ENCODE measurements at regions of chr5 and their contacts with region 1.

Region 1: DNA sequence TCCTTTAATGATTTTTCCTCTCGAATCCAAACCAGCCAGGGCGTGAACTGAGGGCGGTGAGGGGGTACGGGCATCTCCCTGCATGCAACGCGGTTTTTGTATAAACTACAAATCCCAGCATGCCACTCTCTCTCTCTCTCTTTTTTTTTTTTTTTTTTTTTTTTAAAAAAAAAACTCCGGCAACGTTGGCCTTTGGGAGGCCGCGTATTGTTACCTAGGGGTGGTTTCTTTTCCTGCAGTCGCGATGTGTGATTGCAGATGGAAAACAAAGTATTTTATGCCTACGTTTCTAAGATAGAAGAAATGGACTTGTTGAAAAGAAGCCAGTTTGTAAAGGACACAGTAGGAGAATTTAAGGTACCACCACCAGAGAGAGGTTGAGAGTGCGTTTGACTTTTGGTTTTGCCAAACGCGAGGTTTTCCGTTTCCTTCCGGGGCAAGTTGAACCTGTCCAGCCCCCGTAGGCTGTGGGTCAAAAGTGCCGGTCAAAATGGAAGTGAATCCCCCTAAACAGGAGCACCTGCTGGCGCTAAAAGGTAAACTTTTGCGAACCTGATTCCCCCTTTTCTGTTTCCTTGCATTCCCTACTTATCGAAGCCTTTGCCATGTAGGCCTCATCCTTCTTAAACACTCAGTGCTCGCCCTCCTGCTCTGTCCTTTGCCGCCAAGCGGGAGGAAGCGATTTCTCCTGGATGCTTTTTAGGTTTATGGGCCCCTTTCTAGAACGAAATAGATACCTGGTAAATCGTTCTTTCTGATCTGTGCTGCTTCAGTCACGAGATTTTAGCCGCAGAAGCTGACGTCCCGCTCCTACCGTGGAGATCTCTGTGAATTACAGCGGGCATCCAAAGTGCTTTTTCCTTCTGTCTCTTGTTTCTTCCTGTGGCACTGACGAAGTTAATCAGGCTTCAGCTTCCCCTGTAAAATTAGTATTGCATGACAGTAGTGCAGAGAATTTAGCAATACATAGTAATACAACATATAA is at the starts of genes SHLD3 and TRAPPC13:
- DNase-seq: peak; percentile 47 to 92
- H3K4me3 ChIP-seq: peak within 1 kb of the TSS; percentile 85 to 86
- H3K27ac ChIP-seq: peak within 1 kb of the TSS; percentile 80 to 83
- H3K4me1 ChIP-seq: peaks cover 0 to 21% of the 10 kb centered on the region in 2 donors
- H3K27me3 ChIP-seq: no peaks in the 10 kb centered on the region
- CTCF ChIP-seq: peak in 1 of 3 experiments; percentile 6
- total RNA-seq, gene SHLD3: not detected
- total RNA-seq, gene TRAPPC13: 7.6 TPM

Region 2: DNA sequence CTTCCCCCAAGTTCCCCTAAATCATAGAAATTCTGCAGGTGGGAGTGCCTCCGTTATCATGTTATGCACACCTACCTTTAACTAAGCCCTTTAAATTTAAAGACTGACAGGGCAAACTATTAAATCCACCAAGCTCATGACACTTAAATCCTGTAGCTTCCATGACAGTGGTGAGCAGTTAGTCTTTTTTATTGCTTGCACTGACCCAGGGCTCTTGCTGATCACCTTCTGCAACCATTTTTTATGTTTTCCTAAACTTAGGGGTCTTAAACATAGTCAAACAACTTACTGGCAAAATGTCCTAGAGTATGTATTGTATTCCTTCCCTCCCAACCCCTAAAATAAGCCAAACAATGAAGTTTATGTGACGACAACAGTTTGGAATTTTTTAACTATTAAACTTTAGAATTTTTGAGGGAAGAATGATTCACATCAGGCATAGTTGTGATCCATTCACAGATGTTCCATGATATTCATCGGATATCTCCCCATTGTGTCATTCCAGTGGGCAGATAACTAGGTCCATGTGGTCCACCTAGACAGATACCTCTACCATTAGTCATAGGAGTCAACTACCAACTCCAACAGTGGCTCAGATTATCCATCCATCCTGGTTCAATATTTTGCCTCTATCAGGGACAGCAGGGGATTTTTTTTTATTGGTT is 426.3 kb before region 1 on chr5:
- intact Hi-C with region 1: no loop called
- DNase-seq: no peak
- H3K4me3 ChIP-seq: no peak overlapping the region
- H3K27ac ChIP-seq: no peak overlapping the region
- H3K4me1 ChIP-seq: no peaks in the 10 kb centered on the region
- H3K27me3 ChIP-seq: no peaks in the 10 kb centered on the region
- CTCF ChIP-seq: no peak

Region 3: DNA sequence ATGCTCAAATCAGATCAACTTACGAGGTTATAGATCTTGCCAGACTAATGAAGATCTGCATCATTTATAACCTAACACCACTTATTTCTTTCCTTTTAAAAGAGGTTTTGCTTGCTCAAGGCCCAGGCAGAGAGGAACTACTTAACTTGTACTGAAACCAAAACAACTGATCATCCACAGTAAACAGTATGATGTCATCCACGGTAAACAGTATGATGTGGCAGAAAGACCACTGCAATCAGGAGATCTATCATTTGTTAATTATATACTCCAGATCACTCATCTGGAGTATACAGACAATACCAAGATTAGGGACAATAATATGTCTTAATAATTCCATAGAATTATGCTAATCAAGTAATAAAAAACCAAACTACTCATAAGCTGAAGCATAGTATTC is 260.0 kb before region 1 on chr5:
- intact Hi-C with region 1: no loop called
- DNase-seq: no peak
- H3K4me3 ChIP-seq: peak overlapping the region in 1 of 2 donors; percentile 37
- H3K27ac ChIP-seq: peak overlapping the region; percentile 51 to 57
- H3K4me1 ChIP-seq: peaks cover 2 to 13% of the 10 kb centered on the region in 2 donors
- H3K27me3 ChIP-seq: no peaks in the 10 kb centered on the region
- CTCF ChIP-seq: no peak

Region 4: DNA sequence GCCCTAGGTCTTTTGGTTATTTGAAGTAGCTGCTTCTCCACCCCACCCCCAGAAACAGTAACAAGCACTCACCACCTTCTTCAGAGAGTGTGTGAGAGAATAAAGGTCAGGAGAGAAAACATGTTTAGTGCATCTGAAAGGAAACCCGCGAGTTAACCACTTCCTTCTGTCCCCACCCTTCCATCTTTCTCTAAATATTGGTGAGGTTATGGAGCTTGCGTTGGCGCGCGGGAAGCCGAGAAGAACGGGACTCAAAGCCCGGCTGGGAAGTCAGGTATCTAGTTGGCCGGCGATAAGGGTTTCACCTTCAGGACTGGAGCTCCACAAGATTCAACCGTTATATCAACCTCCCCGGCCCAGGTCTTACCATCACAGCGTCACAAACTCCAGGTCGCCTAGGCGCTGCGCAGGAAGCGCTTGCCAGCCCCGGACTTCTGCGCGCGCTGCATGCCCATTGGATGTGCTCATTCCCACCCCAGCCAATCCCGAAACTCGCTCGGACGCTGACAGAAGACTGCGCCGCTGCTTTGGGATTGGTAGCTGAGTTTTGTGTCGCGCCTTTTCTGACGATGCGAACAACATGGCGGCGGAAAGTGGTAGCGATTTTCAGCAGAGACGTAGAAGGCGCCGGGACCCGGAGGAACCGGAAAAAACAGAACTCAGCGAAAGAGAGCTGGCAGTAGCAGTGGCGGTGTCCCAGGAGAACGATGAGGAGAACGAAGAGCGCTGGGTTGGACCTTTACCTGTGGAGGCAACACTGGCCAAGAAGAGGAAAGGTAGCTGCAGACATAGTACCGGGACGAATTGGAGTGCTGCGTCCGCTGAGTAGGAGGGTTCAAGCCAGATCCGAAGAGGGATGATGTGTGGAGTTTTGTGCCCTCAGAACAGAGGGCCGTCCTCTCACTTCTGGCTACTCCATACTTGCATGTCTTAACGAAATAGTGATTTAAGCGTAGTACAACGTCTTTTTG is 61.8 kb before region 1 on chr5 and contains the starts of genes CENPK and PPWD1:
- intact Hi-C with region 1: loop called (anchors 2 kb)
- DNase-seq: peak; percentile 90 to 96
- H3K4me3 ChIP-seq: peak within 1 kb of the TSS; percentile 75 to 92
- H3K27ac ChIP-seq: peak within 1 kb of the TSS; percentile 75 to 86
- H3K4me1 ChIP-seq: peaks cover 0 to 12% of the 10 kb centered on the region in 2 donors
- H3K27me3 ChIP-seq: no peaks in the 10 kb centered on the region
- CTCF ChIP-seq: no peak
- total RNA-seq, gene CENPK: 5.2 TPM
- total RNA-seq, gene PPWD1: 28.6 TPM

Region 5: DNA sequence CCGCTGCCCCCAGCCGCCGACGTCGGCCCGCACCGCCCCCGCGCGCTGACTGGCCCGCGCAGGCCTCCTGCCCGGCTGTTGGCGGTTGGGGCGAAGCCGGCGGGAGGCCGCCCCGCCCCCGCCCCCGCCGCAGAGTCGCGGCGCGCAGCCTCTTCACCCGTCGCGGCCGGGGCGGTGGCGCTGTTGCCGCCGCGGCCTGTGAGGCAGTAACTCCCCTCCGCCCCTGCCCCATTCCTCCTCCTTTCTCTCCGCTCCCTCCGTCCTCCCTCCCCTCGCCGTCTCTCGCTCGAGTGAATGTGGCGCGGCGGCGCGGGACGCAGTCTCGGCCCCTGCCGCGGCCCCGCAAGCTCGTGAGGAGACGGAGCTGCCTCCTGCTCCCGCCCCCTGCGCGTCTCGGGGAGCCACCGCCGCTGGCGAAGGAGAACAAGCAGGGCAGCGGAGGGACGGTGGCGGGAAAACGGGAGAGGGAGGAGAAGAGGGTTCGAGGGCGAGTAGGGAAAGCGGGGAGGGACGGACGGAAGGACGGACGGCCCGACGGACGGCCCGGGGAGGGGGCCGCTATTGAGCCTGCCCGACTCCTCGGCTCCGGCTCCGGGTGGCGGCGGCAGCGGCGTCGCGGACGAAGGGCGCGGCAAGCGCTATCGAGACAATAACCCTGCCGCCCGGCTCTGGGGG is 300.9 kb after region 1 on chr5:
- intact Hi-C with region 1: loop called (anchors 1 kb)
- DNase-seq: peak; percentile 18 to 90
- H3K4me3 ChIP-seq: peak overlapping the region; percentile 97 to 99
- H3K27ac ChIP-seq: peak overlapping the region; percentile 98 to 100
- H3K4me1 ChIP-seq: peaks cover 0 to 6% of the 10 kb centered on the region in 2 donors
- H3K27me3 ChIP-seq: no peaks in the 10 kb centered on the region
- CTCF ChIP-seq: peak in 2 of 3 experiments; percentile 28 to 39

Region 6: GRCh38 chr5:66144074-66144833 is 519.4 kb after region 1 on chr5 and contains the start of gene SREK1:
- intact Hi-C with region 1: loop called (anchors 2 kb)
- DNase-seq: peak; percentile 65 to 94
- H3K4me3 ChIP-seq: peak within 1 kb of the TSS; percentile 89 to 92
- H3K27ac ChIP-seq: peak within 1 kb of the TSS; percentile 98 to 100
- H3K4me1 ChIP-seq: peaks cover 0 to 11% of the 10 kb centered on the region in 2 donors
- H3K27me3 ChIP-seq: no peaks in the 10 kb centered on the region
- CTCF ChIP-seq: no peak
- total RNA-seq, gene SREK1: 31.6 TPM

Measured in ascending aorta (tissue), 2 donors.